ENCODE measurements at regions of chr17 and their contacts with region 1.

Region 1: DNA sequence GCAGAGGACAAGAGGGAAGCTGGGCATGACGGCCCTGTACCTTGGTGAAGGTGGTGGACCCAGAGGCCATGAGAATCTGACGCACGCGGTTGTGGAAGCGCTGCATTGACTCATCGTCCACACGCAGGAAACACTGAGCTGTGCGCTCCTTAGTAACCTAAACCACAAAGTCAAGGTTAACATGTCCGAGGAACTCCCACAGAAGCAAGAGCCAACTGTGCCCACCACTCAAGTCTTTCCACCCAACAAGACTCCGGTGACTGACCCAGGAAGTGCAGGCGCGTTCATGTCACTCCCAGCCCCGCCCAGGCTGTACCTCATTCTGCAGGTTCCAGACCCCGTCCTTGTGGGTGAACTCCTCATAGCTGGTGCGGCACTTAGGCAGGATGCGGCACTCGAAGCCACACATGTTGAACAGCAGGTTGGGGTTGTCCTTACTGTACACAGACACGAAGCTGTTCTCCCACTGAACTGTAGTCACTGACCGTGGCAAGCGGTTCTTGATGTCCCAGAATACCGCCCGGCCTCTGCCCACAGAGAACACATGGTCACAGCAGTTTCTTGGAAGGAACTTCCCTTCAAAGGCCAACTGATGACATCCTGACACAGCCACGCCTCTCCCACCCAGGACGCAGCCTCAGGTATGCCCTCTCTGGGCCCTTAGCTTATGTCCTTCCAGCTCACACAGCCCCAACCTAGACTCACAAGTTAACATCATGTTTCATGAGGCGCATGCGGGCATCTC is 11.5 kb downstream of the PRPF8 start:
- DNase-seq: no peak
- H3K4me3 ChIP-seq: no peak overlapping the region
- H3K4me3 Mint-ChIP-seq: no peak overlapping the region
- H3K27ac ChIP-seq: peak overlapping the region in 1 of 2 donors; percentile 14
- H3K27ac Mint-ChIP-seq: peak overlapping the region in 3 of 7 donors; percentile 10 to 71 (median 42)
- H3K4me1 ChIP-seq: no peaks in the 10 kb centered on the region
- H3K4me1 Mint-ChIP-seq: peaks cover 6% of the 10 kb centered on the region
- H3K27me3 ChIP-seq: no peaks in the 10 kb centered on the region
- H3K27me3 Mint-ChIP-seq: peaks cover 0 to under 1% (median 0%) of the 10 kb centered on the region in 3 donors
- CTCF ChIP-seq: no peak

Region 2: DNA sequence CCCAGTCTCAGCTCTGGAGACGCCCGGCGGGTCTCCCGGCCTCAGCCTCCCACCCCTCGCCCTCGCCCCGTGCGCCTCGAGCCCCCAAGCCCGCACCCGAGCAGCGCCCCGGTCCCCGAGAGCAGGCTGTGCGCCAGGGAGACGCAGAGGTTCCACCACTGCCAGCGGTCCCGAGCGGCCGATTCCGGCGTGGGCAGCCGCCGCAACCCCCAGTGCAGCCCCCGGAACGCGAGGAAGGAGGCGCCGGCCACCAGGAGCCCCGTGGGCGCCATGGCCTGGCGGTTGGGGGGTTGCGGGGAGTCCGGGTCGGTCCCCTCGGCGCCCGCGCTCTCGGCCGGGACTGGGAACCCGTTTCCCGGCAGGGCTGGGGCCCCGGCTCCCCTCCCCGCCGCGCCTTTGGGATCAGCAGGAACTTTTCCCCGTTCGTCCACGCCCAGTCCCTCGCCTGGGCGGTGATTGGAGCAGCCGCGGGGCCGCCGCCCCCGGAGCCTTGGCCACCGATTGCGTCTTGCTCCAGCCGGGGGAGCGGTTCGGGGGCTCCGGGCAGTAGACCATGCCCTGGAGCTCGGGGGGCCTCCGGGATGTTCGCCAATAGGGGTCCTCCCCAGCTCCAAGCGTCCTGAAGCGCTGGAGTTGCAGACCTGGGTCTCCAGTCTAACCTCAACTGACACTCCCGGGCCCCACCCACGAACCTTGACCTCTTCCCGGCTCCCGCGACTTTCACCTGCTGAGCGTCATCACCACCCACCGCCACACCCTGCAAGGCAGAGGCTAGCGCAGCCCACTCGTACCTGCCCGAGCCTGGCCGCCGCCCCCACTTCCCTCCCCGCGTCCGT is 37.0 kb after region 1 on chr17 and contains the start of gene TLCD2:
- intact Hi-C with region 1: loop called in 1 of 2 experiments (anchors 5 kb)
- DNase-seq: no peak
- H3K4me3 ChIP-seq: peak within 1 kb of the TSS; percentile 31 to 73 (median 40)
- H3K4me3 Mint-ChIP-seq: peak within 1 kb of the TSS; percentile 69 to 89
- H3K27ac ChIP-seq: no peak within 1 kb of the TSS
- H3K27ac Mint-ChIP-seq: peak within 1 kb of the TSS in 1 of 7 donors; percentile 63
- H3K4me1 ChIP-seq: peaks cover 32 to 38% of the 10 kb centered on the region in 2 donors
- H3K4me1 Mint-ChIP-seq: peaks cover 37% of the 10 kb centered on the region
- H3K27me3 ChIP-seq: peaks cover 0 to 31% of the 10 kb centered on the region in 2 donors
- H3K27me3 Mint-ChIP-seq: peaks cover 31 to 74% (median 39%) of the 10 kb centered on the region in 3 donors
- CTCF ChIP-seq: no peak
- polyA plus RNA-seq, gene TLCD2: 0.03 TPM in 1 of 3 donors, not detected in the others

Region 3: GRCh38 chr17:1783834-1784611 is 110.8 kb after region 1 on chr17:
- intact Hi-C with region 1: loop called (anchors 5 to 10 kb)
- DNase-seq: peak; percentile 84 to 86 (median 84)
- H3K4me3 ChIP-seq: peak overlapping the region; percentile 12 to 58 (median 15)
- H3K4me3 Mint-ChIP-seq: peak overlapping the region; percentile 71 to 85
- H3K27ac ChIP-seq: peak overlapping the region; percentile 93 to 97
- H3K27ac Mint-ChIP-seq: peak overlapping the region; percentile 97 to 99 (median 98)
- H3K4me1 ChIP-seq: peaks cover 27 to 29% of the 10 kb centered on the region in 2 donors
- H3K4me1 Mint-ChIP-seq: peaks cover 30% of the 10 kb centered on the region
- H3K27me3 ChIP-seq: no peaks in the 10 kb centered on the region
- H3K27me3 Mint-ChIP-seq: peaks cover 0 to 5% (median 1%) of the 10 kb centered on the region in 3 donors
- CTCF ChIP-seq: peak; percentile 76

Region 4: DNA sequence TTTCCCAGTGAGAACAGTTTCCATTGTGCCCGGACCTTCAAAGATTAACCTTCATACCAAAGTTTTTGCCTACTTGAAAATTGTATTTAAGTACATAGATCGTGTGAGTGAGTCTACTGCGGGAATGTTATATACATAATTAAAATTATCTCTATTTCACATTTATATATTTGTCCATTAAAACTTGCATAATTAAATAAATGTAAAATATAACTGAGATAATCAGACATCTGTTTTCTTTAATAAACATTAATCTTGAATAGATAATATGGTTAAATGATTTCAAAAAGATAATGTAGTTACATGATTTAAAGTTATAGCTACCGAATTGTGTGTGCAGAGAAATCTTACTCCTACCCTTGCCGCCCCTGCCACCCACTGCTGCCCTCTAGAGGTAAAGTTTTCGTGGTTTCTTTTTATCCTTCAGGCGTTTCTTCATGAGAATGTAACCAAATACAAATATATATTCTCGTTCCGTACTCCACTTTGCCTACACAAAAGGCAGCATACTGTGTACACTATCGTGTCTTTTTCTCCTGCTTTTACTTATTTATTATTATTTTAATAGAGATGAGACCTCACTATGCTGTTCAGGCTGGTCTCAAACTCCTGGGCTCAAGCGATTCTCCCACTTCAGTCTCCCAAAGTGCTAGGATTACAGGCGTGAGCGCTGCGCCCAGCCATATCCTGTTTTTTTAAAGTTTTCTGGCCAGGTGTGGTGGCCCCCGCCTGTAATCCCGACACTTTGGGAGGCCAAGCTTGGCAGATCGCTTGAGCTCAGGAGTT is 192.2 kb after region 1 on chr17:
- intact Hi-C with region 1: loop called (anchors 1 to 5 kb)
- DNase-seq: peak; percentile 30 to 40 (median 32)
- H3K4me3 ChIP-seq: no peak overlapping the region
- H3K4me3 Mint-ChIP-seq: no peak overlapping the region
- H3K27ac ChIP-seq: no peak overlapping the region
- H3K27ac Mint-ChIP-seq: no peak overlapping the region
- H3K4me1 ChIP-seq: no peaks in the 10 kb centered on the region
- H3K4me1 Mint-ChIP-seq: no peaks in the 10 kb centered on the region
- H3K27me3 ChIP-seq: no peaks in the 10 kb centered on the region
- H3K27me3 Mint-ChIP-seq: no peaks in the 10 kb centered on the region
- CTCF ChIP-seq: peak; percentile 80

Measured in CD14-positive monocyte (primary cell).